Activated CD4-positive, alpha-beta memory T cell treated with anti-CD3 and anti-CD28 coated beads for 36 hours (primary cell): ENCODE measurements at regions of chr11 and their contacts with region 1.

Region 1: DNA sequence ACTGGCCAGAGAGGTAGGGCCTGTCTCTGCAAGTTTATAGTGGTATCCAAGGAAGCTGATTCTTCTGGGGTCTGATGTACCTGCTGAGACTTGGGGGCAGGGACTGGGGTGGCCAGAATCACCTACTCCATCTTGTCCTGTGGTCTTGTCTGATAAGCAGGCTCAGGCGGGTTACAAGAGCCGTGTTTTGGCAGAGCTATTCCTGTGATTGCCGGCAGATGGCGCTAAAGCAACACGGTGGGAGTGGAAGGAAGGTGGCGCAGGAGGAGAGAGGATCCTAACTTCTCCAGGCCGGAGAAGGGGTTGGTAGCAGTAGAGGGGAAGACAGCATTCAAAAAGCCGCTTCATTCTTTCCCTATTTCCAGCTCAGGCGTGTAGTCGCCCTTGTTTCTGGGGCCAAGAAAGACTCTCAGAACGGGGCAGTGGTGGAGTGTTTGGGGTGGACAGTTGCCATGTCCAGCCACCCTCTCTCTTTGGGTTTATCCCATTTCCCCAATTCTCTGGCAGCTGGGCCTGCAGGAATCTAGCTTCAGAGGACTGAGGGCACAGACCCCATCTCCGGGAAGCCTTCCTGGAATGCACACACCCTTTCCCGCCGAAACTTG is 15.1 kb downstream of the CHRM1 start:
- DNase-seq: peak; percentile 87
- H3K4me3 Mint-ChIP-seq: no peak overlapping the region
- H3K27ac Mint-ChIP-seq: no peak overlapping the region
- H3K4me1 Mint-ChIP-seq: peaks cover 24% of the 10 kb centered on the region
- H3K27me3 Mint-ChIP-seq: peaks cover 8% of the 10 kb centered on the region

Region 2: DNA sequence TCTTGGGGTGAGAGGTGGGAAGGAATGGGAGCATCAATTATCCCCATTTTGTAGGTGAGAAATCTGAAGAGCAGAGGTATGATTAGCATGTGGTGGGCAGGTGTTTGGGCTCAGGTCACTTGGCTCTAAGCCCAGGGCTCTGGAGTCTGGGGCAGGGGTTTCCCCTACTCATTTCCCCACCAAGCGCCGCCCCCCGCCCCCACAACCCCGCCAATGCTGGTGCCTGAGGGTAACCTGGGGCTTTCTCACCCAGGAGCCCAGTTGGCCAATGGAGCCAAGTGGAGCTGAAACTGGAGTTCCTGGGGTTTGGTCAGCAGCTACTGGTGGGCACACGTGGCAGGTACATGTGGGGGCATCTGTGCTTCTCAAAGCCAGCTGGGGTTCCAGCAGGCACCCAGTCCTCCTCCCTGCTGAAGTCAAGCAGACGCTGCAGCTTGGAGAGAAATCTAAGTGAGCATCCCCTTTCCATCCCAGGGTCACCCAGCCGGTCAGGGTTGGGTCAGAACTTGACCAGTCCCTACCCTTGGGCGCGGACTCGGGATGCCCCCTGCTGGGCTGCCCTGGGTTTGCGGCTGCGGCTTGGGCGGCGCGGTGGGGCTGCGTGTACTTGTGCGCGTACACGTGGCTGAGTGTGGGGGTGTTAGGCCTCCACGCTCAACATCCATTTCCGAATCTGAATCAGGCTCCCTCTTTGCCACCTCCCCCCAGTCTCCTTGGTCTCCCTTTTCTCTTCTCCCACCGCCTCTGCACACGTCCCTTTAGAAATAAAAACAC is 16.8 kb after region 1 on chr11:
- CTCF ChIA-PET with region 1: interaction called, 31 read pairs
- POLR2A ChIA-PET with region 1: no interaction called
- intact Hi-C with region 1: no loop called
- DNase-seq: peak; percentile 76
- H3K4me3 Mint-ChIP-seq: peak overlapping the region; percentile 53
- H3K27ac Mint-ChIP-seq: no peak overlapping the region
- H3K4me1 Mint-ChIP-seq: peaks cover 29% of the 10 kb centered on the region
- H3K27me3 Mint-ChIP-seq: peaks cover 49% of the 10 kb centered on the region

Region 3: GRCh38 chr11:62974848-62975522 is 69.0 kb after region 1 on chr11:
- CTCF ChIA-PET with region 1: interaction called, 95 read pairs
- POLR2A ChIA-PET with region 1: no interaction called
- intact Hi-C with region 1: loop called (anchors 5 kb)
- DNase-seq: peak; percentile 26
- H3K4me3 Mint-ChIP-seq: no peak overlapping the region
- H3K27ac Mint-ChIP-seq: no peak overlapping the region
- H3K4me1 Mint-ChIP-seq: no peaks in the 10 kb centered on the region
- H3K27me3 Mint-ChIP-seq: peaks cover 10% of the 10 kb centered on the region

Region 4: DNA sequence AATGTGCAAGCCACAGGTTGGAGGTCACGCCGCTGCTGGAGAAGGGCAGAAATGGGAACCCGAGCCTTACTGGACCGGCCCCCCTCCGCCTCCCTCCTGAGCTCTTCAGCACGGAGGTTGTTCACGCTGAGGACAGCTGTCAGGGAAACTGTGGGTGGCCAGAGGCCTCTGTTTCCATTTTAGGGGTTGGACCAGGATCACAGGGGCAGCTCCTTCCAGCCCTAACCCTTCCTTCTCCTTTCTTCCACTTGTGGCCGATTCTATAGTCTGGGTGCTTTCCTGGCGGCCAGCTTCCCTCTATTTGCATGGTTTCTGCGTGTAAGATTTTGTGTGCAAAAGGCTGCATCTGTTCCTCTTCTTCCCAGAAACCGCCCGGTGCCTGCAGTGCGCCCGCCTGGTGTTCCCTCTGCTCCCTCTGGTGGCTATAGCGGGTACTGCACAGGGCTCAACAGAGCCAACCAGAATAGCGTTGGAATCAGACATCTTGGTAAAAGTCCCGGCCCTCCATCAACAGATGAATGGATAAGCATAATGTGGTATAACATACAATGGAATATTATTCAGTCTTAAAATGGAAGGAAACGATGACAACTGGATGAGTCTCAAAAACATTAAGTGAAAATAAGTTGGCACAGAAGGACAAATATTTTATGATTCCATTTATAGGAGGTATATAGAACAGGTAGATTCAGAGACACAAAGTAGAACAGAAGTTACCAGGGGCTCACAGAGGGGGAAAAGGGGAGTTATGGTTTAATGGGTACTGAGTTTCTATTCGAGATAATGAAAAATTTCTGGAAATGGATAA is 118.0 kb after region 1 on chr11:
- CTCF ChIA-PET with region 1: interaction called, 512 read pairs
- POLR2A ChIA-PET with region 1: interaction called, 3 read pairs
- intact Hi-C with region 1: loop called (anchors 1 kb)
- DNase-seq: peak; percentile 89
- H3K4me3 Mint-ChIP-seq: no peak overlapping the region
- H3K27ac Mint-ChIP-seq: no peak overlapping the region
- H3K4me1 Mint-ChIP-seq: peaks cover 4% of the 10 kb centered on the region
- H3K27me3 Mint-ChIP-seq: peaks cover 9% of the 10 kb centered on the region

Region 5: DNA sequence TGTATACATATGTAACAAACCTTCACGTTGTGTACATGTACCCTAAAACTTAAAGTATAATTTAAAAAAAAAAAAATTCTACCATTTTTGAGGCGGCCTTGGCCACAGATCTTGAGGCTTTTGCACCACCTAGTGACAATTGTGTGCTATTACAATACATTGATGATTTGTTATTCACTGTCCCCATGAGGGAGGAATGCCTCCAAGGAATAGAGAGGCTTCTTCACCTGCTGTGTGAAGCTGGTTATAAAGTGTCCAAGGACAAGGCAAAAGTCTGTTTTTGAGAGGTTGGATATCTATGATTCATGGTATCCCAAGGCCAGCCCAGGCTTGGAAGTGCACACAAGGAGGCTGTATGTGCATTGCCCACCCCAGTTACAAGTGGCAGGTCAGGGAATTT is 306.7 kb after region 1 on chr11:
- CTCF ChIA-PET with region 1: interaction called, 12 read pairs
- POLR2A ChIA-PET with region 1: no interaction called
- intact Hi-C with region 1: loop called (anchors 5 kb)
- DNase-seq: peak; percentile 11
- H3K4me3 Mint-ChIP-seq: no peak overlapping the region
- H3K27ac Mint-ChIP-seq: no peak overlapping the region
- H3K4me1 Mint-ChIP-seq: no peaks in the 10 kb centered on the region
- H3K27me3 Mint-ChIP-seq: peaks cover 18% of the 10 kb centered on the region